ENCODE measurements at regions of chr1 and their contacts with region 1.

Region 1: DNA sequence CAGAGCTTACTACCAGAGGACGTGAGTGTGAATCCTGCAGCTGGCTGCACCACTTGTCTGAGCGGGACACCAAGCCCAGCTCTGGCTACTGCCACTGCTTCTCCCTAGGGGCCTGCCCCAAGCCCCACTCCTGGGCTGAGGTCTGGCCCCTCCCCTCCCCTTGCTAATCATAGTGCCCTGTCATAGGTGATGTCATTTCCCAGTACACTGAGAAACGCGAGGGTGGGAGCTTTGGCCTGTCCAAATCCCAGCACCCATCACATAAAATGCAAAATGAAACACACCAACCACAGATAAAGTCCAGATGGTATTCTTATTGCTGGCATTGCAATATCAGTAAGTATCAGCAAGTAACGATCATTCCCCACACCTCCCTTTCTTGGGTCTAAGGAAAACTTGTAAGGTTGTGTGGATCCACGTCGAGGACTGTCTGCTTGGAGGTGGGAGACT is 77.7 kb downstream of the TOMM20 start:
- DNase-seq: peak; percentile 76
- CTCF ChIP-seq: no peak

Region 2: GRCh38 chr1:234970731-234971476 is 80.0 kb before region 1 on chr1:
- CTCF ChIA-PET with region 1: no interaction called
- POLR2A ChIA-PET with region 1: interaction called, 16 read pairs
- DNase-seq: no peak
- CTCF ChIP-seq: no peak

Region 3: GRCh38 chr1:235022981-235023710 is 27.8 kb before region 1 on chr1:
- CTCF ChIA-PET with region 1: interaction called, 15 read pairs
- POLR2A ChIA-PET with region 1: interaction called, 5 read pairs
- DNase-seq: peak; percentile 58
- CTCF ChIP-seq: no peak

Region 4: GRCh38 chr1:235030919-235031596 is 19.9 kb before region 1 on chr1:
- CTCF ChIA-PET with region 1: interaction called, 10 read pairs
- POLR2A ChIA-PET with region 1: interaction called, 7 read pairs
- DNase-seq: no peak
- CTCF ChIP-seq: no peak

Region 5: GRCh38 chr1:235075188-235075926 is 24.4 kb after region 1 on chr1:
- CTCF ChIA-PET with region 1: interaction called, 30 read pairs
- POLR2A ChIA-PET with region 1: interaction called, 8 read pairs
- DNase-seq: peak; percentile 81
- CTCF ChIP-seq: no peak

Region 6: GRCh38 chr1:235181561-235182245 is 130.8 kb after region 1 on chr1:
- CTCF ChIA-PET with region 1: no interaction called
- POLR2A ChIA-PET with region 1: no interaction called
- DNase-seq: no peak
- CTCF ChIP-seq: no peak

Measured in GM10248 (cell line).